ENCODE measurements at regions of chrX and their contacts with region 1.

Region 1: GRCh38 chrX:68822641-68823410 is 6.0 kb upstream of the EFNB1 start:
- DNase-seq: peak; percentile 65 to 79
- ATAC-seq: peak; percentile 64
- H3K4me3 ChIP-seq: no peak overlapping the region
- H3K27ac ChIP-seq: no peak overlapping the region
- H3K4me1 ChIP-seq: no peaks in the 10 kb centered on the region
- H3K27me3 ChIP-seq: no peaks in the 10 kb centered on the region

Region 2: GRCh38 chrX:68652326-68653170 is 170.3 kb before region 1 on chrX:
- intact Hi-C with region 1: no loop called
- DNase-seq: no peak
- ATAC-seq: no peak
- H3K4me3 ChIP-seq: no peak overlapping the region
- H3K27ac ChIP-seq: no peak overlapping the region
- H3K4me1 ChIP-seq: no peaks in the 10 kb centered on the region
- H3K27me3 ChIP-seq: no peaks in the 10 kb centered on the region

Region 3: GRCh38 chrX:68710870-68711576 is 111.8 kb before region 1 on chrX:
- intact Hi-C with region 1: no loop called
- DNase-seq: no peak
- ATAC-seq: no peak
- H3K4me3 ChIP-seq: no peak overlapping the region
- H3K27ac ChIP-seq: no peak overlapping the region
- H3K4me1 ChIP-seq: no peaks in the 10 kb centered on the region
- H3K27me3 ChIP-seq: no peaks in the 10 kb centered on the region

Region 4: DNA sequence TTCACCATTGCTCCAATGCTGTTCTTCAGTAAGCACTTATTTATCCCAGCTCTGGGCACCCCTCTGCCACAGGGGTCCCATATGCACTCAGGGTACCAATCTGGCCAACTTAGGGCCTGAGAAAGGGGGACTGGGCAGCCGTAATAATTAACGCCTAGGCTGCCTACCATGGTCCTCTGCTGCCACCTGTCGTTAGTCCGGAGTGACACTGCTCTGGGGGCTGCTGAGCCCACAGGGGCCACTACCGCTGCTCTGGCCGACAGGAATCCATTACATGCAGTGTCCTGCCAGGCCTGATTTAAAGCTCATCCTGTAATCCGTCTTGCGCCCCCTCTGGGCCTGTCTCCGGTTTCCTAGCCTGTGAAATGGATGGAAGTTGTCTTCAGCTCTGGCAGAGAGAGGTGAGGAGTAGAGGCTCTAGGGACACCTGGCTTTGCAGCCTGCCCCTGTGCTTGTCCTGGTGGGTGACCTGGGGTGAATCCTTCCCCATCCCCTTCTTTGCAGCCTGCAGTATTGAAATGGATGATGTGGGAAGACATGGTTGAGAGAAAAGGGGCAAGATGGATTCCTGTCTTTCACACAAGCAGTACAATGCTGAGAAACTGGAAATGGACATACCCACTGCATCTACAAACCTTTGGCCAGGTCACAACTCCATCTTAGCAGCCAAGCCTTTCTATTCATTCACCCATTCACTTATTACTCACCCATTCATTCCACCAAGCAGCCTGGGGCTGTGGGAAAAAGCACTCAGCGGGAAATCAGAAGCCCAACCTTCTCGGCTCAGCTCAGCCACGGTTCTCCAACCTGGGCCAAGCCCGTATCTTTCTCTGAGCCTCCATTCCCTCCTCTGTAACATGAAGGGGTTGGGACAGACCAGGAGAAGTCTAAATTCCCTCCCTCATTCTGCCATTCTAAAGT is 565.0 kb after region 1 on chrX:
- intact Hi-C with region 1: loop called (anchors 5 kb)
- DNase-seq: peak in 1 of 2 donors; percentile 77
- ATAC-seq: peak; percentile 68
- H3K4me3 ChIP-seq: no peak overlapping the region
- H3K27ac ChIP-seq: no peak overlapping the region
- H3K4me1 ChIP-seq: no peaks in the 10 kb centered on the region
- H3K27me3 ChIP-seq: no peaks in the 10 kb centered on the region

Measured in aorta (tissue), 5 donors.